ENCODE measurements at regions of chr3 and their contacts with region 1.

Region 1: DNA sequence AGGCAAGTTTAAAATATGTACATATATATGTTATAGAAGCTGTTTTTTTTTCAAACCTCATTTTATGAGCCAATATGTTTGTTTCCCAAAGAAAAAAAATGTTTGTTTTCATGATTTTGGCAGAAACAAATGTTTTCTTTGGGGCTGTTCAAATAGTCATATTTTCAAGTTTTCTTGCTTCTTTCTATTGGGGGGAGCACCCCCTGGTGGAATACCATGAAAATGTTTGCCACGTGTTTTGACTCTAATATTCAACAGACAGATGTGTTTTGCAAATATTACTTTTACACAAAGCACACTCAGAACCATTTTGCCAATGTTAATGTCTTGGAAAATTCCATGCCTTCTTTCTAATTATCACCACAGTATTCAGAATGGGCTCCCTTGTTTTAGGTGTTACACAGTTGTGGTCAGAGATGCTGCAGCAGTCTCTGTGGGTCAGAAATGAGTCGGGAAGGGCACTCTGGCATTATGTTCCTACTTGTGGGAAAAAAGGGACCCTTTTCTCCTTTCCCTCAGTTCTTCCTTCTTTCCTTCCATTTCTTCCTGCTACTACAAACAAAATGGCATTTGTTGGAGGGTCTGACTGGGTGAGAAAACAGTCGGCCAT is 817.0 kb downstream of the TUSC7 start:
- DNase-seq: no peak
- ATAC-seq: no peak
- H3K4me3 Mint-ChIP-seq: no peak overlapping the region
- H3K27ac Mint-ChIP-seq: no peak overlapping the region
- H3K4me1 Mint-ChIP-seq: no peaks in the 10 kb centered on the region
- H3K27me3 Mint-ChIP-seq: no peaks in the 10 kb centered on the region
- CTCF ChIP-seq: no peak

Region 2: GRCh38 chr3:116770815-116771450 is 755.6 kb before region 1 on chr3:
- CTCF ChIA-PET with region 1: interaction called, 14 read pairs
- POLR2A ChIA-PET with region 1: no interaction called
- intact Hi-C with region 1: loop called (anchors 1 kb)
- DNase-seq: peak; percentile 16
- ATAC-seq: peak; percentile 82
- H3K4me3 Mint-ChIP-seq: no peak overlapping the region
- H3K27ac Mint-ChIP-seq: no peak overlapping the region
- H3K4me1 Mint-ChIP-seq: no peaks in the 10 kb centered on the region
- H3K27me3 Mint-ChIP-seq: no peaks in the 10 kb centered on the region
- CTCF ChIP-seq: peak; percentile 92

Region 3: DNA sequence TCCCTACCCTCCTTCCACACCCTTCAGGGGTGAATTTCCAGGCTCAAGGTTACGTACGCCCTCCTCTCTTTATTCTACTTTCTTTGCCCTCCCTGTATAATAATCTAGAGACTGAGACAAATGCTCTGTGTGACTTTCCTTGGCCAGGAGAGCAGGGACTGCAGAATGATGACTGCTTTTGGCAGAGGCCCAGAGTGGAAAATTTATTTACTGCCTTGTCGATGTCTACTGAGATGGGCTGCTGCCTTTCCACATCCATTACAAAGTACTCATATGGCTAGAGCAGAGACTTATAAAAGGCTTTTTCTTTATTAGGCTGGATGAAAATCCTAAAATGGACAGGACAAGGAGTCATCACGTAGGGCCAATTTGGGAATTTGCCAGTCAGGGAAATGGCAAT is 240.8 kb before region 1 on chr3:
- CTCF ChIA-PET with region 1: no interaction called
- POLR2A ChIA-PET with region 1: no interaction called
- intact Hi-C with region 1: no loop called
- DNase-seq: no peak
- ATAC-seq: no peak
- H3K4me3 Mint-ChIP-seq: no peak overlapping the region
- H3K27ac Mint-ChIP-seq: no peak overlapping the region
- H3K4me1 Mint-ChIP-seq: no peaks in the 10 kb centered on the region
- H3K27me3 Mint-ChIP-seq: no peaks in the 10 kb centered on the region
- CTCF ChIP-seq: no peak